ENCODE measurements at regions of chr18 and their contacts with region 1.

Region 1: GRCh38 chr18:57561728-57562423 is 24.6 kb downstream of the FECH start:
- DNase-seq: peak; percentile 68
- ATAC-seq: peak; percentile 53
- H3K4me3 ChIP-seq: no peak overlapping the region
- H3K4me3 Mint-ChIP-seq: no peak overlapping the region
- H3K27ac ChIP-seq: no peak overlapping the region
- H3K27ac Mint-ChIP-seq: no peak overlapping the region
- H3K4me1 ChIP-seq: no peaks in the 10 kb centered on the region
- H3K4me1 Mint-ChIP-seq: peaks cover 1% of the 10 kb centered on the region
- H3K27me3 ChIP-seq: no peaks in the 10 kb centered on the region
- H3K27me3 Mint-ChIP-seq: no peaks in the 10 kb centered on the region
- CTCF ChIP-seq: peak; percentile 98

Region 2: DNA sequence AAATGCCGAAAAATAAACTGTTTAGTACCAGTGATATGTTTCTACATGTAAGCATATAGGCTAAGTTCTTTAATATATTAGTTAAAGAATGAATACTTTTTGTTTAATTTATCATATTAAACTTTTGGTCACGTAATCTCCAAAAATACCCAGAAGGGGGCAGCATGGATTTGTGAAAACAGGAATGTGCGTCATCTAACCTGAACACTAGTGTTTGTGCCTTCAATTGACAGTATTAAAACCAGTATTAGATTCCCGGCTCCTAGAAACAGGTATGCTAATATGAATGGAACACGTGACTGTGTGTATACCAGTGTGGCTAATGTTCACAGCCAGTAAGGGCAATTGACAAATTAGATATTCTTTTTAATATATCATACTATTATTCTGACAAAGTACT is 858.9 kb before region 1 on chr18:
- CTCF ChIA-PET with region 1: interaction called, 30 read pairs
- POLR2A ChIA-PET with region 1: no interaction called
- intact Hi-C with region 1: loop called (anchors 2 kb)
- DNase-seq: peak; percentile 44
- ATAC-seq: peak; percentile 39
- H3K4me3 ChIP-seq: no peak overlapping the region
- H3K4me3 Mint-ChIP-seq: peak overlapping the region; percentile 39
- H3K27ac ChIP-seq: no peak overlapping the region
- H3K27ac Mint-ChIP-seq: no peak overlapping the region
- H3K4me1 ChIP-seq: no peaks in the 10 kb centered on the region
- H3K4me1 Mint-ChIP-seq: peaks cover 2% of the 10 kb centered on the region
- H3K27me3 ChIP-seq: no peaks in the 10 kb centered on the region
- H3K27me3 Mint-ChIP-seq: no peaks in the 10 kb centered on the region
- CTCF ChIP-seq: peak; percentile 64

Region 3: DNA sequence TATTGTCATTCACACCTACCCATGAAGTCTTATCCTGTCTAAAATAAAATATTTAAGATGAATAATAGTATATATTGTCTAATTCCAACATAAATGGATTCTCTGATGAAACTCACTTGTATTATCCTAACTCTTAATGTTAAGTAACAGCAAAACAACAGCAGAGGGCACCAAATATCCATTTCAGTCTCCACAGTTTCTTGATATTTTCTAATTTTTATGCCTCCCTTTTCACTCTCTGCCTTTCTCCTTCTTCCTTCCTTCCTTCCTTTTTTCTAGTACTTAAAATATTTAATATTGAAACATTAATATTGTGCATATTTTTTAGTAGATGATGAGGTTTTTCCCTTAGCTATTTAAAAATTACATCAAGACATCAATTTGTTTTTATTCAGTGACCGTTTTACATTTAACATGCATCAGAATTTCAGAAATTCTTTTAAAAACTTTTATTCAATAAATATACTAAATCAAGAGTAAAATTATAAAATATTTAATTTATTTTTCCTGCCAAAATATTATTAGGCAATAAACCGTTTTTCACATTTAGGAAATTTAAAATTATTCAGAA is 813.1 kb before region 1 on chr18:
- CTCF ChIA-PET with region 1: interaction called, 19 read pairs
- POLR2A ChIA-PET with region 1: no interaction called
- intact Hi-C with region 1: loop called (anchors 1 kb)
- DNase-seq: peak; percentile 31
- ATAC-seq: no peak
- H3K4me3 ChIP-seq: no peak overlapping the region
- H3K4me3 Mint-ChIP-seq: no peak overlapping the region
- H3K27ac ChIP-seq: no peak overlapping the region
- H3K27ac Mint-ChIP-seq: no peak overlapping the region
- H3K4me1 ChIP-seq: peaks cover 11 to 15% of the 10 kb centered on the region in 2 donors
- H3K4me1 Mint-ChIP-seq: peaks cover 20% of the 10 kb centered on the region
- H3K27me3 ChIP-seq: no peaks in the 10 kb centered on the region
- H3K27me3 Mint-ChIP-seq: no peaks in the 10 kb centered on the region
- CTCF ChIP-seq: peak; percentile 77

Region 4: DNA sequence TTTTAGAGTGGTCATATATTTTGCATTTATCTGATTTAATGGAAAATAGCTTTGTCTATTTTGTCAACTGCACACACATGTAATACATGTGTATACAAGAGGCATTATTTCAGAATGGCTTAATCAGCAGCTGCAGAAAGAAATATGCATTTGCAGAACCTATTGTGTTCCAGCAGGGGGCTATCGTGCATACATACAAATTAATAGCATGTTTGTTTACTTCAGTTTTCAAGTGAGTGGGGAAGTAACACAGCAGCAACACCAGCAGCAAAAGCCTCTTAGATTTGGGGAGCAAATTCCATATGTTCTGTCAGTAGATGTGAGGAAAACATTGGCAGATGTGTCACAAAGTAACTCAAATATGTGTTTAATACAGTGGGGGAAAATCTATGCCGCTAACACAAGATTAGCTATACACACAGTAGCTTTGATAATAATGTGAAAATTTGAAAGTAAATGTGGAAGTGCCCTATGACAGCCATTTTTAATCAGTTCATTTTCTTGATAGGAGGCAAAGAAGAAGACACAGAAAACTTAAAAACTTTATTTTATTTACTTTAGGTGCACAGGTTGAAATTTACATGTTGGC is 692.6 kb before region 1 on chr18:
- CTCF ChIA-PET with region 1: interaction called, 12 read pairs
- POLR2A ChIA-PET with region 1: no interaction called
- intact Hi-C with region 1: loop called (anchors 1 kb)
- DNase-seq: peak; percentile 46
- ATAC-seq: no peak
- H3K4me3 ChIP-seq: no peak overlapping the region
- H3K4me3 Mint-ChIP-seq: no peak overlapping the region
- H3K27ac ChIP-seq: no peak overlapping the region
- H3K27ac Mint-ChIP-seq: no peak overlapping the region
- H3K4me1 ChIP-seq: no peaks in the 10 kb centered on the region
- H3K4me1 Mint-ChIP-seq: no peaks in the 10 kb centered on the region
- H3K27me3 ChIP-seq: no peaks in the 10 kb centered on the region
- H3K27me3 Mint-ChIP-seq: no peaks in the 10 kb centered on the region
- CTCF ChIP-seq: peak; percentile 72

Region 5: GRCh38 chr18:57581302-57581934 is 19.5 kb after region 1 on chr18:
- CTCF ChIA-PET with region 1: interaction called, 11 read pairs
- POLR2A ChIA-PET with region 1: no interaction called
- intact Hi-C with region 1: no loop called
- DNase-seq: peak; percentile 83
- ATAC-seq: peak; percentile 94
- H3K4me3 ChIP-seq: no peak overlapping the region
- H3K4me3 Mint-ChIP-seq: peak overlapping the region; percentile 67
- H3K27ac ChIP-seq: peak overlapping the region in 1 of 2 donors; percentile 37
- H3K27ac Mint-ChIP-seq: peak overlapping the region; percentile 81
- H3K4me1 ChIP-seq: peaks cover 25 to 34% of the 10 kb centered on the region in 2 donors
- H3K4me1 Mint-ChIP-seq: peaks cover 39% of the 10 kb centered on the region
- H3K27me3 ChIP-seq: no peaks in the 10 kb centered on the region
- H3K27me3 Mint-ChIP-seq: no peaks in the 10 kb centered on the region
- CTCF ChIP-seq: no peak

Region 6: DNA sequence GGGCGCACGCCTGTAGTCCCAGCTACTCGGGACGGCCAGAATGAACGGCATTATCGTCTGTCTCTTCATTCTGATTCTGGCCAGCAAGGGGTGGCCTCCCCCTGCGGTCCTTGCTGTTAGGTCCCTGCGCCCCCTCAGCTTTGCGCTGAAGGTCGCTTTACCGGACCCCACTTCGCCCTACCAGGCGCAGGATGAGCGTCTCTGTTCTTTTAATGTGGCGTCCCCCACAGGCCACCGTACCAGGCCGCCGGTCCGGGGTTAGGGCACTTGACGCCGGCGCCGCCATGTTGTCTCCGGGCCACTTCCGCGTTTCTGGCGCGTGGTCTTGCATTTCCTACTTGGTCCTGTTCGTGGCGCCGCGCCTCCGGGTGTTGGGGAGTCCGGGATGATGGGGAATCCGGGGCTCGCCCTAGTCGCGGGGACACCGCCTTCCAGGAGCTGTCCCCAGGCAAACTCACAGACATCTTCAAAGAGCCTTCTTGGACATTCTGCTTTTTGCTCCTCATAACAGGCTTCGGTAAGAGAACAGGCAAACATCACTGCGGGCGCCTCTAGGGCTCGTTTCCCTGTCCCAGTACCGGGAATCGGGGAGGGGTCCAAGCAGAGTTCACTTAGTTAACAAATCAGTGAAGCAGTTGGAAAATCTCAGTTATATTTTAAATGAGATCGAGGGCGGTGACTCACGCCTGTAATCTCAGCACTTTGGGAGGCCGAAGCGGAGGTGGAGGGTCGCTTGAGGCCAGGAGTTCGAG is 68.3 kb after region 1 on chr18:
- CTCF ChIA-PET with region 1: no interaction called
- POLR2A ChIA-PET with region 1: no interaction called
- intact Hi-C with region 1: no loop called
- DNase-seq: peak; percentile 95
- ATAC-seq: peak; percentile 93
- H3K4me3 ChIP-seq: peak overlapping the region; percentile 89 to 99 (median 98)
- H3K4me3 Mint-ChIP-seq: peak overlapping the region; percentile 97
- H3K27ac ChIP-seq: peak overlapping the region; percentile 82 to 85
- H3K27ac Mint-ChIP-seq: peak overlapping the region; percentile 98
- H3K4me1 ChIP-seq: peaks cover 12 to 13% of the 10 kb centered on the region in 2 donors
- H3K4me1 Mint-ChIP-seq: peaks cover 23% of the 10 kb centered on the region
- H3K27me3 ChIP-seq: no peaks in the 10 kb centered on the region
- H3K27me3 Mint-ChIP-seq: no peaks in the 10 kb centered on the region
- CTCF ChIP-seq: peak; percentile 77

Region 7: GRCh38 chr18:58128381-58129374 is 566.8 kb after region 1 on chr18:
- CTCF ChIA-PET with region 1: no interaction called
- POLR2A ChIA-PET with region 1: no interaction called
- intact Hi-C with region 1: loop called (anchors 5 kb)
- DNase-seq: no peak
- ATAC-seq: no peak
- H3K4me3 ChIP-seq: no peak overlapping the region
- H3K4me3 Mint-ChIP-seq: no peak overlapping the region
- H3K27ac ChIP-seq: no peak overlapping the region
- H3K27ac Mint-ChIP-seq: no peak overlapping the region
- H3K4me1 ChIP-seq: peaks cover 0 to 4% of the 10 kb centered on the region in 2 donors
- H3K4me1 Mint-ChIP-seq: no peaks in the 10 kb centered on the region
- H3K27me3 ChIP-seq: no peaks in the 10 kb centered on the region
- H3K27me3 Mint-ChIP-seq: no peaks in the 10 kb centered on the region
- CTCF ChIP-seq: no peak

Measured in B cell (primary cell).